SK-N-SH (cell line): ENCODE measurements at regions of chr15 and their contacts with region 1.

Region 1: DNA sequence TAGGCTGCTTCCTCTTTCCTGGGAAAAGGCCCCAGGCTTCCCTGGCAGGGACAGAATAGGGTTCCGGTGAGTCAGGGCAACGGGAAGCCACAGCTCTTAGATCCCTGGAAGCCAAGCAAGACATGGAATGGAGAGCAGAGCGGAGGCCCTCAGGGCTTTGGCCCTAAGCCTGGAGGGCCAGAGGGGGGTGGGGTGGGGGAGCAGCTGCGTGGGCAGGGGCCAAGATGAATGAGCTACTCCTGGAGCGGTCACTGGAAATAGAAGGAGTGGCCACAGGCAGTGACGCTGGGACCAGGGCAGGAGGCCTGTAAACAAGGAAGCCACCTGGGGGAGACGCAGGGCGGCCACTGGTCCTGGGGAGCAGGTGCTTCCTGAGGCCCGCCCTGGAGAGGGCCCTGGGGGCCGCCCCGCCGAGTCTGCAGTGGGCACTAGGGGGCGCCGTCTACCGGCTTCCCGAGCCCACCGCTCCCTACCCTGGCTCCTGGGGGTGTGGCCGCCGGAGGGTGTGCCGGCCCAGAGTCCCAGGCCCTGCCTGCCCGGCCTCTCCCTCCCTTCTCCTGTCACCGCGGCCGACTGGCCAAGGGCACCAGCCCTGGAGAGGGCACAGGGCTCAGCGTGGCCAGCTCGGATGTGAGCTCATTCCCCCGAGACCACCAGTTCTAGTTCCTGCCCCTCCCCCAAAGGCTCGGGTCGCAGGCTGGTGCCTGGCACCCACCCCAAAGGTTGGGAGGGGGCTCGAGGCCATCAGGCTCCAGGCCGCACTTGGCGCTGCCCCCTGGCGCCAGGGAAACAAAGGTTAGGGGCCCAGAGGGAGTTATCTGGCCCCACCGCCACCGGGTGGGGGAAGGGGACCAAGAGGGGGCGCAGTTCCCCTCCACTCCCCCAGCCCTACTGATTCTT is 12.1 kb downstream of the VPS18 start:
- DNase-seq: peak; percentile 95
- H3K4me3 ChIP-seq: peak overlapping the region; percentile 43 to 57
- H3K27ac ChIP-seq: peak overlapping the region; percentile 74 to 86
- H3K4me1 ChIP-seq: peaks cover 12 to 42% of the 10 kb centered on the region in 2 experiments; a peak in 3 of 4 replicates
- H3K27me3 ChIP-seq: no peaks in the 10 kb centered on the region
- CTCF ChIP-seq: peak; percentile 72
- EP300 ChIP-seq: no peak
- RAD21 ChIP-seq: peak; percentile 70

Region 2: GRCh38 chr15:40702077-40702476 is 204.3 kb before region 1 on chr15:
- CTCF ChIA-PET with region 1: no interaction called
- POLR2A ChIA-PET with region 1: no interaction called
- DNase-seq: peak; percentile 36
- H3K4me3 ChIP-seq: no peak overlapping the region
- H3K27ac ChIP-seq: no peak overlapping the region
- H3K4me1 ChIP-seq: no peaks in the 10 kb centered on the region
- H3K27me3 ChIP-seq: no peaks in the 10 kb centered on the region
- CTCF ChIP-seq: peak; percentile 53
- EP300 ChIP-seq: no peak
- RAD21 ChIP-seq: peak; percentile 61

Region 3: DNA sequence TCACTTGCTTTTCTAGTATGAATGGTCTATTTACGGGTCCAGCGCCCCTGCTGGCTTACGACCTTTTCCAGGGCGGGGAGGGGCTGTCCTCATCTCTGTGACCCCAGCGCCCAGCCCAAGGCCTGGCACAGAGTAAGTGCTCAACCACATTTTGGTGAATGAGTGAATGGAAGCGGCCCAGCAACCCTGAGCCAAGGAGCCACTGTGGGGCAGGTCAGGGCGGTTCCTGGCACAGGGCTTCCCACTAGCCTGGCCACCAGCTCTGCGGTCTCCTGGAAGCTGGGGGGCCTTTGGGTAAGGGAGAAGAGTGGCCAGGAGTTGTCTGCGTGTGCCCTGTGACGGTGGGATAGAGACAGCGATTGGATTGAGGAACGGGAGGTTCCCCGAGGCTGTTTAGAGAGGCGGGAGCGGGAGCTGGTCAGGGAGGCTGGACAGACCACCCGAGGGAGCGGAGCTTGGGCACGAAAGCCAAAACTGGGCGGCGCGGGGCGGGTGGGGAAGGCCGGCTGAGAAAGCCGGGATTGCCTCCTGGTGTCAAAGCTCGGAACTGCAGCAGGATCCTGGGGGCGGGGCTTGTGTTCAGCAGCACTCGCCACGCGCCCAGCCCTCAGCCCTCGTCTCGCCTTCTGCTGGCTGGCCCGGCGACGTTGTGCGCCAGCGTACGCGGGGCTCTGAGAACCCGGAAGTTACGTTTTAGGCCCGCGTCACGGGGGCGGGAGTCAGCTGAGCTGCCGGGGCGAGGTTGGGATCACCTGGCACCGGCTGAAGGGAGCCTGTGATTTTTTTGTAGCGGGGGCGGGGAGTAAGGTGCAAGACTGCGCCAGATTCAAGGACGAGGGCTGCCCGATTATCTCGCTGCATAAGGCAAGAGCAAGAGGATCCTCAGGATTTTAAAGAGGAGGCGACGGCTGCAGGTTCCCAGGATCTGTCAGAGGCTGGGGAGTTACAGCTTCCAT is 12.3 kb before region 1 on chr15 and contains the start of gene VPS18:
- CTCF ChIA-PET with region 1: interaction called, 116 read pairs
- POLR2A ChIA-PET with region 1: interaction called, 3 read pairs
- DNase-seq: peak; percentile 95
- H3K4me3 ChIP-seq: peak within 1 kb of the TSS; percentile 88 to 91
- H3K27ac ChIP-seq: peak within 1 kb of the TSS; percentile 51 to 85
- H3K4me1 ChIP-seq: peaks cover 0 to 14% of the 10 kb centered on the region in 2 experiments; a peak in 1 of 4 replicates
- H3K27me3 ChIP-seq: no peaks in the 10 kb centered on the region
- CTCF ChIP-seq: peak; percentile 73
- EP300 ChIP-seq: 0 out of 4 replicates have a peak, but pooled peaks of 1 of the 2 experiments have one; percentile 11
- RAD21 ChIP-seq: peak; percentile 85
- polyA plus RNA-seq, gene VPS18: 13.5 and 14.1 TPM in 2 replicates

Region 4: GRCh38 chr15:40960926-40961325 is 54.6 kb after region 1 on chr15:
- CTCF ChIA-PET with region 1: interaction called, 12 read pairs
- POLR2A ChIA-PET with region 1: no interaction called
- DNase-seq: no peak
- H3K4me3 ChIP-seq: no peak overlapping the region
- H3K27ac ChIP-seq: no peak overlapping the region
- H3K4me1 ChIP-seq: peaks cover 9 to 30% of the 10 kb centered on the region in 2 experiments; a peak in 3 of 4 replicates
- H3K27me3 ChIP-seq: no peaks in the 10 kb centered on the region
- CTCF ChIP-seq: no peak
- EP300 ChIP-seq: no peak
- RAD21 ChIP-seq: no peak

Region 5: DNA sequence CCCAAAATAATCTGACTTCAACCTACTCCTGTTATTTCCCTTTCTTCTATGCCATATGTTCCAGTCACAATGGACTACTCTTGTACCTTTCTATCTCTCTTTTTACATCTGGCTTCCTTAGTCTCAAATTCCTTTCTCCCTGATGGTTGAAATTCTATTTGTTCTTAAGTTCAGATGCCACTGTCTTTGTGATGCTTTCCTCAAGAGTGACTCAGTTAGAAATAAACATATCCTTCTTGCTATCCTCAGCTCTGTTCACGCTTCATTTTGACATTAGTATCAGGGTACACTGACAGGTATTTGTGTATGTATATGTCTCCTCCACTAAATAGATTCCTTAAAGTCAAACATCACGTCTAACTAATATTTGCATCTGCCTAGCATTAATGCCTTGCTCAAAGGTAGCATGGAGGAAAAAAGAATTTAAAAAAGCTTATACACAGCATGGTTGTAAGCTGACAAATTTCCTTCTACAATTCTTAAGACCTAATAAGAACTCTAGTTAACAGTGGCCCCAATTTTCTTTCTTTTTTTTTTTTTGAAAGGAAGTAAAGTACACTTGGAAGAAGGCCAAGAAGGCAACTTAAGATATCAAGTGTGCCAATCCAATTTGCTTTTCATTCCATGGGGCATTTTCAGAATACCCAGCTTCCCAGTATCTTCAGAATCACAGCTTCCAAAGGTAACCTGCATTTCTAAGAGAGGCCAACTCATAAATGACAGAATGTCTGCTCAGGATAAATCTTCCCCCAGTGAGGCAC is 104.9 kb after region 1 on chr15:
- CTCF ChIA-PET with region 1: interaction called, 324 read pairs
- POLR2A ChIA-PET with region 1: no interaction called
- DNase-seq: no peak
- H3K4me3 ChIP-seq: no peak overlapping the region
- H3K27ac ChIP-seq: peak overlapping the region in 1 of 2 experiments; percentile 14; a peak in 2 of 4 replicates
- H3K4me1 ChIP-seq: peaks cover 3 to 12% of the 10 kb centered on the region in 2 experiments
- H3K27me3 ChIP-seq: no peaks in the 10 kb centered on the region
- CTCF ChIP-seq: no peak
- EP300 ChIP-seq: no peak
- RAD21 ChIP-seq: no peak

Region 6: DNA sequence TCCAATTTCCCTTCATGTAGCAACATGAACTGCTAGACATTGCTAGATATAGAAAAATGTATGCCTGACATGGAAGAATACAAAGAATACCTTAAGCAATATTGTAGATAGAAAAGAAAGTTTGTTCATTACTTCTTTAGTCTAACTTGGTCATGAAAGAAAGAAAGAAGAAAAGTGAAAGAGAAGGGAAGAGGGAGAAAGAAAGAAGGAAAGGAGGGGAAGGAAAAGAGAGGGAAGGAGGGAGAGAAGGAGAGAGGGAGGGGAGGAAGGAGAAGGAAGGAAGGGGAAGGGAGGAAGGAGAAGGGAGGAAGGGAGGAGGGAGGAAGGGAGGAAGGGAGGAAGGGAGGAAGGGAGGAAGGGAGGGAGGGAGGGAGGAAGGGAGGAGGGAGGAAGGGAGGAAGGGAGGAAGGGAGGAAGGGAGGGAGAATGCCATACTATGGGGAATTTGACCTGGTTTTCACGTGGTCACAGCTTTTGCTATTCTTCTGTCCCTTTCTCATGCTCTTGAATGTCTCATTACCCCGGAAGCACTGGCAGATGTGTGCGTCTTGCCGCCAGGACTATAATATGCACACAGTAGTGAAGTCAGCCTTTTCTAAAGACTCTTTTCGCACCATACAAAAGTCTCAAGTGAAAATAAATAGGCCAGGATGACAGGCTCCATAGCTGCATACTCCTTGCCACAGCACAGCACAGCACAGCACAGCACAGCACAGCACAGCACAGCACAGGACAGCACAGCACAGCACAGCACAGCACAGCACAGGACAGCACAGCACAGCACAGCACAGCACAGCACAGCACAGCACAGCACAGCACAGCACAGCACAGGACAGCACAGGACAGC is 125.1 kb after region 1 on chr15:
- CTCF ChIA-PET with region 1: interaction called, 324 read pairs
- POLR2A ChIA-PET with region 1: no interaction called
- DNase-seq: no peak
- H3K4me3 ChIP-seq: no peak overlapping the region
- H3K27ac ChIP-seq: no peak overlapping the region
- H3K4me1 ChIP-seq: no peaks in the 10 kb centered on the region
- H3K27me3 ChIP-seq: no peaks in the 10 kb centered on the region
- CTCF ChIP-seq: no peak
- EP300 ChIP-seq: no peak
- RAD21 ChIP-seq: no peak

Region 7: DNA sequence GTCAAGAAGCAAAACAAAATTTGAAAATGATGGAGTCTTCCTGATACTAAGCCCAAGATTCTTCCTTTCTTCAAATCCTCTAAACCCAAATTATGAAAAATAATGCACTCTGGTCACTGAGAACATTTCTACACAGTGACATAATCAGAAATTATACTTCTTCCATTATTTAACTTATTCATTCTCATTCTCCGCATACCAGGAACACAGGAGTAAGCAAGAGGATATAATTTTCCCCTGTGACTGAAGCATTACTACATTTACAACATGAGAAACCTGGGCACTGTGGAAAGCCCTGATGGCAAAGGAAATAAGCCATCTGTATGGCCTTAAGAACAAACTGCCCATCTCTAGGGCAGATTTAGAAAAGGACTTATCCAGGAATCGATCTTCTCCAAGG is 277.2 kb after region 1 on chr15:
- CTCF ChIA-PET with region 1: interaction called, 89 read pairs
- POLR2A ChIA-PET with region 1: interaction called, 3 read pairs
- DNase-seq: no peak
- H3K4me3 ChIP-seq: 0 out of 4 replicates have a peak overlapping the region, but pooled peaks of 1 of the 2 experiments have one; percentile 0
- H3K27ac ChIP-seq: peak overlapping the region in 1 of 2 experiments; percentile 35; a peak in 2 of 4 replicates
- H3K4me1 ChIP-seq: peaks cover 0 to 9% of the 10 kb centered on the region in 2 experiments; a peak in 1 of 4 replicates
- H3K27me3 ChIP-seq: no peaks in the 10 kb centered on the region
- CTCF ChIP-seq: no peak
- EP300 ChIP-seq: no peak
- RAD21 ChIP-seq: no peak